ENCODE measurements at regions of chr4 and their contacts with region 1.

Region 1: GRCh38 chr4:182874304-182874751 is 42.9 kb downstream of the DCTD start:
- DNase-seq: peak; percentile 90
- H3K4me3 ChIP-seq: peak overlapping the region; percentile 21
- H3K27ac ChIP-seq: peak overlapping the region; percentile 73
- H3K4me1 ChIP-seq: peaks cover 40% of the 10 kb centered on the region
- H3K27me3 ChIP-seq: no peaks in the 10 kb centered on the region
- CTCF ChIP-seq: no peak

Region 2: DNA sequence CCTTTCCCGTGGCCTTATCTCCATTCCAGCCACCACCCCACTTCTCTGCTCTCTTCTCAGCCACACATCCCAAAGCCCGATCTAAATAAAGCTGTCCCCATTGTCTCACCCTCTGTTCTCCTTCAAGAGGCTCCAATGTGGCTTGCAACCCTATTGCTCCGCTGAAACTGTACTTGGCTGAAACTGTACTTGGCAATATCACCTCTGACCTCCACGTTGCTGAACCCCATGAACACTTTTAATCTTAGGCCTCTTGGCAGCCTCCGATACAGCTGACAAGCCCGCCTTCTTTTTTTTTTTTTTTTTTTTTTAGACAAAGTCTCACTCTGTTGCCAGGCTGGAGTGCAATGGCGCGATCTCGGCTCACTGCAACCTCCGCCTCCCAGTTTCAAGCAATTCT is 30.7 kb after region 1 on chr4:
- CTCF ChIA-PET with region 1: no interaction called
- POLR2A ChIA-PET with region 1: no interaction called
- intact Hi-C with region 1: loop called (anchors 1 kb)
- DNase-seq: no peak
- H3K4me3 ChIP-seq: no peak overlapping the region
- H3K27ac ChIP-seq: no peak overlapping the region
- H3K4me1 ChIP-seq: peaks cover 15% of the 10 kb centered on the region
- H3K27me3 ChIP-seq: no peaks in the 10 kb centered on the region
- CTCF ChIP-seq: no peak

Measured in A673 (cell line).